HepG2 (cell line): ENCODE measurements at regions of chr12 and their contacts with region 1.

Region 1: DNA sequence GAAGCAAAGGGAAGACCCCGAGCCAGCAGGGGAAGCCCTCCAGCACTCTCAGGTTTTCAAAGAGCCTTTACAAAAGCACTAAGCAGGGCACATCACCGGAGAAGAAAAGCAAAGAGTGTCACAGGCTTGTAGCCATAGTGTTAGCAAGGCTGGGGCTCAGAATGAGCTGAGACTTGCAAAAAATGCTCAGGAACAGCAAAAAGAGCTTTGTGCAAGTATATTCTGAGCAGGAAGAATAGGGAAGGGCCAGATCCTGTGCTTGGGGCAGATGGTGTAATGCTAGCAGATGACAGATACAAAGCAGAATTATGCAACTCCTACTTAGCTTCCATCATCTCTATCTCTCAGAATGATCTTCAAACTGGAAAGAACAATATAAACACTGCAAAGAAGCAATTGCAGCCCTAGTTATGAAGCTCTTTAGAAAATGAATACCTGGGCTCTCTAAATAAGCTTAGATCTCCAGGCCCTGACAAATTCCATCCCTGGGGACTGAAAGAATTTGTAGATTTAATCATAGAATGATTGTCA is 23.7 kb upstream of the PARP11 start:
- DNase-seq: no peak
- ATAC-seq: no peak
- H3K4me3 ChIP-seq: no peak overlapping the region
- H3K27ac ChIP-seq: no peak overlapping the region
- H3K4me1 ChIP-seq: no peaks in the 10 kb centered on the region
- H3K27me3 ChIP-seq: peaks cover 0 to 5% of the 10 kb centered on the region in 2 experiments; a peak in 1 of 5 replicates
- CTCF ChIP-seq: no peak
- EP300 ChIP-seq: no peak
- POLR2A ChIP-seq: no peak
- RAD21 ChIP-seq: no peak

Region 2: GRCh38 chr12:3913278-3913677 is 16.4 kb after region 1 on chr12:
- CTCF ChIA-PET with region 1: no interaction called
- POLR2A ChIA-PET with region 1: no interaction called
- in situ Hi-C with region 1: no loop called
- intact Hi-C with region 1: no loop called
- DNase-seq: no peak
- ATAC-seq: no peak
- H3K4me3 ChIP-seq: no peak overlapping the region
- H3K27ac ChIP-seq: no peak overlapping the region
- H3K4me1 ChIP-seq: no peaks in the 10 kb centered on the region; the same call in 1 of the 2 replicates
- H3K27me3 ChIP-seq: peaks cover 2 to 19% of the 10 kb centered on the region in 2 experiments; a peak in 2 of 5 replicates
- CTCF ChIP-seq: no peak
- EP300 ChIP-seq: no peak
- POLR2A ChIP-seq: no peak
- RAD21 ChIP-seq: no peak

Region 3: GRCh38 chr12:4091016-4091743 is 194.3 kb after region 1 on chr12:
- CTCF ChIA-PET with region 1: no interaction called
- POLR2A ChIA-PET with region 1: no interaction called
- in situ Hi-C with region 1: loop called (anchors 10 kb)
- intact Hi-C with region 1: no loop called
- DNase-seq: no peak
- ATAC-seq: no peak
- H3K4me3 ChIP-seq: no peak overlapping the region
- H3K27ac ChIP-seq: no peak overlapping the region
- H3K4me1 ChIP-seq: no peaks in the 10 kb centered on the region
- H3K27me3 ChIP-seq: no peaks in the 10 kb centered on the region
- CTCF ChIP-seq: no peak
- EP300 ChIP-seq: no peak
- POLR2A ChIP-seq: no peak
- RAD21 ChIP-seq: no peak